GM18951 (cell line): ENCODE measurements at regions of chr11 and their contacts with region 1.

Region 1: DNA sequence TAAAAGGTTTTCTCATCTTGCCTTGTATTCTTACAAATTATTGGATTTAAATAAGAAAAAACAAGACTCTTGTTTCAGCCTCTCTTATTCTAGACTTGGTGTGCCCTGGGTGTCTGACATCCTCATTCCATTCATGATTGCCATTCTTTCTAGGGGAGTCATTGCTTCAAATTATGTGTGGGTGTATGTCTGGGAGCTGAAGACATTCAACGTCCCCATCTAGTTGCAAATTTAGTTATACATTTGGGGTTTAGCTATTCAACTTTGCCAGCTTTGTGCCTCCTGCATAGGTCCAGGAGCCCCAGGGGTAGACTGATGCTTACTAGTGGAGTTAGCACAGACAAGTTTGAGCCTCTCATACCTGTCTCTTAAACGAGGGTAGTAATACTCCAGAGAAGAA is 18.0 kb downstream of the MAML2 start:
- POLR2A ChIP-seq: no peak

Region 2: DNA sequence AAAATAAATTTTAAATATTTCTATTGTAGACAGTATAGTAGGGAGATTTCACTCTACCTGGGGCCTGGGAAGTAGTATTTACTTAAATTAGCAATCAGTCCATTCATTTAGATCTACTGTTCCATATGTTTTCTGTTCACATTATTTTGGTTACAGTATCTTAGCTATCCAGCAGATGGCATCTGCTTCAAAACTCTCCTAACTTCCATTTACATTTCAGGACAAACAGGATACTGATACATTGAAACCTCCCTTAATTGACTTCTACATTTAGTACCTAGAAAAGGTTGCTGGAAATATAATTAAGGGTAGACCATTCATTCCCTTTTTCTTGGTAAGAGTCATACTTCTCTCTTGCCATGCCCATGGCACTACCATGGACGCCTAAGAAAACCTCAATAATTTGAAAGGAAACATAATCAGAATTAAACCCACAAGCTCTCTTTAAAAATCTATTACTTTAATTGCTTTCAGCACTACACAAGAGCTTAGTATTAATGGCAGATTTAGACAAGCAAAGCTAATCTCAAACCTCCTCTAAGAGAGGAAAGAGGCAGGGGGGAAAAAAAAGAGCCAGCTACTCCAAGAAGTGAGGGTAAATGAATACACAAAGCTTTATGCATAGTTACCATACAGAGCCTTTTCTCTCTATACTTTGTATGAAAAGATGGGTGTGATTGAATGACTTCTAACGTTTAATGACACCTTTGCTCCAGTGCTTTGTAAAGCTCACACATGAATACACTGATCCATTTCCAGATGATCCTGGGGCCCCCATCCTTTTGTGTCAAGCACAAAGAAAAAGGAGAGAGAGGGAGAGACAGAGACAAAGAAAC is 269.9 kb before region 1 on chr11:
- in situ Hi-C with region 1: loop called (anchors 10 kb)
- POLR2A ChIP-seq: no peak

Region 3: GRCh38 chr11:96715208-96715607 is 390.2 kb after region 1 on chr11:
- in situ Hi-C with region 1: no loop called
- POLR2A ChIP-seq: no peak